ENCODE measurements at regions of chr2 and their contacts with region 1.

Region 1: DNA sequence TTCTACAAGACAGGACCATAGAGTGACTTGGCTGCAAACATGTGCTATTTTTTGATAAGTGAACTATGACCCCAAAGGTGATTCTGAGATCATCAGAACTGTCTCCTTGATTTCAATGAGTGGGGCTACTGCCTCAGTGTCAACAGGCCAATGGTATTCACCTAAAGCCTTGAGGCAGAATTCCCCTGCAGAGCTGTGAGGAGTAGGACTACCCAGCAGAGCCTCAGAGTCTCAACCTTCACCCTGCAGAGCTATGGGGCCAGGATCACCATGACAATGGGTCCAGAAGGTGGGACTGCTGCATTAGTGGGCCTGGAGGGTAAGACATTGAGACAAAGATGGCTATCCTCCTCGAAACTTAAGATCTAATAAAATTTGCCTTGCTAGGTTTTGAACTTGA is 1668.2 kb upstream of the SLC39A10 start:
- DNase-seq: no peak
- ATAC-seq: no peak
- H3K4me3 ChIP-seq: no peak overlapping the region
- H3K27ac ChIP-seq: 0 out of 2 replicates have a peak overlapping the region, but pooled peaks have one; percentile 58
- H3K4me1 ChIP-seq: no peaks in the 10 kb centered on the region
- H3K27me3 ChIP-seq: no peaks in the 10 kb centered on the region
- CTCF ChIP-seq: no peak

Region 2: DNA sequence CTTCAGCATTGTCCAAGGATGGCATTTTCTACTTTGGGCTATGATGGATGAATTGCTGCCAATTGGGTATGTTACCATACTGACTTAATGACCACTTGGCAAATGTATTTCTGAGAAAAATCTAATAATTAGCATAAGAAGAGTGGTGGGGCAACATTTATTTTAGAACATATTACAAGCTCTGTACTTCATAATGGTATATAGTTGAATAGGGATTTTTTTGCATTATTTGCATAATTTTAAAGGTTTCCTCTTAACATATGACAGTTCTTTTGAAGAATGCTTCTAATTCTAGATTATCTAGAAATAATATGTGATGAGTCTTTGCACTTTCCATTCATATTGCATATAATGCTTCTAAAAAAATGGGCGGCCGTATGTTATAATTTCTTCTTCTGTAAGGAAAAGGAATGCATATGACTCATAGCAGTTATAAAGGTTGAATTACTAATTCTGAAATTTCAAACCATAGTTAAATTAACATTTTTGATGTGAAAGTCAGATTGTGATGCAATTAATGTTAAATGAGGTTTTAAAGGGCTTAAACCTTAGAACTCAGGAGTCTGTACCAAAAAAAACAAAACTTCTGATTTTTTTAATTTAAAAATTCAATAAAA is 15.9 kb after region 1 on chr2:
- CTCF ChIA-PET with region 1: no interaction called
- POLR2A ChIA-PET with region 1: no interaction called
- intact Hi-C with region 1: loop called (anchors 2 kb)
- DNase-seq: peak; percentile 43
- ATAC-seq: peak; percentile 51; the same call in 1 of the 2 replicates
- H3K4me3 ChIP-seq: no peak overlapping the region
- H3K27ac ChIP-seq: no peak overlapping the region
- H3K4me1 ChIP-seq: peaks cover 6% of the 10 kb centered on the region; the same call in 1 of the 2 replicates
- H3K27me3 ChIP-seq: no peaks in the 10 kb centered on the region
- CTCF ChIP-seq: no peak

Measured in PC-3 (cell line).